ENCODE measurements at regions of chr21 and their contacts with region 1.

Region 1: DNA sequence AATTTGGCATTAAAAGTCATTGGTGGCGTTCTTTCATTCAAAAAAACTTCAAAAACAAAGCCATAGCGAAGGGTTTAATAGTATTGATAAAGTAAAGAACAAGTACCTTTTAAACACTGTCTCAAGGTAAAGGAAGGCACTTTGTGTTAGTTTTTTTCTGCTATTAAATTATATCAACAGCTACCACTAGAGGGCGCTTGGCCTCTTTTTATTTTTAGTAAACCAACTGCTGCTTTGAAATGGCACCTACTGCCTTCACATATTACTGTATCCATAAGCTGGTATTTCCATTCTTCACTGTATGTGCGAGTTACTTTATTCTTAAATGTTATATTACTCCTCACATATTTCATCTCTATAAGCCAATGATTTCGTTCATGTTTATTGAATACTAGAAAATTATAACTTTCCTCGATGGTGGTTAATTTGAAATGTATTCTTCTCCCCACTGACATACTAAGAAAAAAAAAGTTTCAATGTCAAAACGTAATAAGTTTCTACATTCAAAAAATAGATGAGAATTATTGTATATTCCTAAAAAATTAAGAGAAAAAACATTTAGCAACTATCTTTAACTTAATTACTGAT is 125.7 kb upstream of the CXADR start:
- DNase-seq: peak in 11 of 14 experiments; percentile 3 to 74 (median 30)
- ATAC-seq: peak; percentile 65
- H3K4me3 ChIP-seq: no peak overlapping the region
- H3K4me3 Mint-ChIP-seq: no peak overlapping the region
- H3K27ac ChIP-seq: no peak overlapping the region
- H3K27ac Mint-ChIP-seq: no peak overlapping the region
- H3K4me1 ChIP-seq: no peaks in the 10 kb centered on the region
- H3K4me1 Mint-ChIP-seq: no peaks in the 10 kb centered on the region
- H3K27me3 ChIP-seq: no peaks in the 10 kb centered on the region
- H3K27me3 Mint-ChIP-seq: peaks cover 5% of the 10 kb centered on the region
- CTCF ChIP-seq: peak; percentile 94

Region 2: DNA sequence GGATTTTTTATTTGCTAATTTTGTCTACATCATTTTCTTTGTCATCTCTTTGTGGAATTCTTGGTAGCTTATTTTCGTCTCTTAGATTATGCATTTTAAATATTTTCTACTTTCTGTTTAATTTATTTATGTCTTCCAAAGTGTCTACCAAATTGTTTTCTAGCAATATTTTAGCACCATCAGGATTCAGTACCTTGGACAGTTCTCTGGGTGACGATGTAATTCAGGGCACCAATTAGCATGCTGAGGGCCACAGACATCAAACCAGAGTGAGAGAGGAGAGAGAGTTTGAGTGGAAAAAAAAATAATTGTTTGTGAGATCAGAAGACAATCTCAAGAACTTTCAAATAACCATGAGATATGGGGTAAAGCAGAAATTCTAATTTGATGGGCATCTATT is 44.1 kb before region 1 on chr21:
- CTCF ChIA-PET with region 1: no interaction called
- POLR2A ChIA-PET with region 1: no interaction called
- intact Hi-C with region 1: no loop called
- DNase-seq: no peak
- ATAC-seq: no peak
- H3K4me3 ChIP-seq: no peak overlapping the region
- H3K4me3 Mint-ChIP-seq: no peak overlapping the region
- H3K27ac ChIP-seq: no peak overlapping the region
- H3K27ac Mint-ChIP-seq: no peak overlapping the region
- H3K4me1 ChIP-seq: no peaks in the 10 kb centered on the region
- H3K4me1 Mint-ChIP-seq: no peaks in the 10 kb centered on the region
- H3K27me3 ChIP-seq: no peaks in the 10 kb centered on the region
- H3K27me3 Mint-ChIP-seq: no peaks in the 10 kb centered on the region
- CTCF ChIP-seq: no peak

Region 3: GRCh38 chr21:17585875-17586450 is 198.8 kb after region 1 on chr21:
- CTCF ChIA-PET with region 1: interaction called, 16 read pairs
- POLR2A ChIA-PET with region 1: interaction called, 4 read pairs
- intact Hi-C with region 1: loop called (anchors 1 kb)
- DNase-seq: peak in 4 of 14 experiments; percentile 27 to 68 (median 63)
- ATAC-seq: peak; percentile 49
- H3K4me3 ChIP-seq: no peak overlapping the region
- H3K4me3 Mint-ChIP-seq: no peak overlapping the region
- H3K27ac ChIP-seq: no peak overlapping the region
- H3K27ac Mint-ChIP-seq: no peak overlapping the region
- H3K4me1 ChIP-seq: no peaks in the 10 kb centered on the region
- H3K4me1 Mint-ChIP-seq: no peaks in the 10 kb centered on the region
- H3K27me3 ChIP-seq: no peaks in the 10 kb centered on the region
- H3K27me3 Mint-ChIP-seq: no peaks in the 10 kb centered on the region
- CTCF ChIP-seq: peak; percentile 79

Region 4: DNA sequence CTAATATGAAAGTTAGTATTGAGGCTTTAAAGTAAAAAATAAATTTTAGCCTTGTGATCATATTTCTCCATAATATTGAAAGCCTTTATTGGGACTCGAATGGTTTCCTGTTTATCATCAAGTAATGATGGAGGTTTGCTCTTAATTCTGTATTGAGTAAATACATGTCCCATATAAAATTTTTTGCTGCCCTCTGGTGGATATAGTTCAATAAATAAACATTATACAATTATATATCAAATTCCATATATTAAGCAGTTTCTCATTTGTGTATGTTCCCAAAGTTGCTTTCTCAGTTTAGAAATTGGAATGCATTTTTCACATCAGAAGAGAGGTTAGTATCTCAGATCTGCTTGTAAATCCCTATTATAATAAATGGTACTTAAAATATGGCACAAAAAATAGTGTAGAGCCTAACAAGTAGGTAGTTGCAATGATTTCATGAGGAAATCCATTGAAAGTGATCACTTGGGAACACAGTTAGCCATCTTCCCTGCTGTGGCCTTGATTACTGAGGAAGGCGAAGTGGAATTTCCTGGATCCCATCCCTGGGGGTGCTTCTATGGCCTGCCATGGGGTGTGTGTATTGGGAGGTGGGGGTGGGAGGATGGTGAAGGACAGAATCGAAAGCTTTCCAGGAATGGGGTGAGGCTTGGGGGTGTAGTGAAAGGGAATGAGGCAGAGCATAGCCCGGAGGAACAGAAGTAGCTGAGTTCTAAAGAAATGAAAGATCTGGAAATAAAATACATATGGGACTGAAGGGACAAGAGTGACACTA is 516.1 kb after region 1 on chr21:
- CTCF ChIA-PET with region 1: no interaction called
- POLR2A ChIA-PET with region 1: no interaction called
- intact Hi-C with region 1: loop called in 1 of 2 experiments (anchors 10 kb)
- DNase-seq: peak in 3 of 14 experiments; percentile 64 to 74 (median 66)
- ATAC-seq: peak; percentile 48
- H3K4me3 ChIP-seq: no peak overlapping the region
- H3K4me3 Mint-ChIP-seq: no peak overlapping the region
- H3K27ac ChIP-seq: no peak overlapping the region
- H3K27ac Mint-ChIP-seq: no peak overlapping the region
- H3K4me1 ChIP-seq: no peaks in the 10 kb centered on the region
- H3K4me1 Mint-ChIP-seq: peaks cover 9% of the 10 kb centered on the region
- H3K27me3 ChIP-seq: no peaks in the 10 kb centered on the region
- H3K27me3 Mint-ChIP-seq: no peaks in the 10 kb centered on the region
- CTCF ChIP-seq: peak; percentile 69